Panc1 (cell line): ENCODE measurements at regions of chr3 and their contacts with region 1.

Region 1: DNA sequence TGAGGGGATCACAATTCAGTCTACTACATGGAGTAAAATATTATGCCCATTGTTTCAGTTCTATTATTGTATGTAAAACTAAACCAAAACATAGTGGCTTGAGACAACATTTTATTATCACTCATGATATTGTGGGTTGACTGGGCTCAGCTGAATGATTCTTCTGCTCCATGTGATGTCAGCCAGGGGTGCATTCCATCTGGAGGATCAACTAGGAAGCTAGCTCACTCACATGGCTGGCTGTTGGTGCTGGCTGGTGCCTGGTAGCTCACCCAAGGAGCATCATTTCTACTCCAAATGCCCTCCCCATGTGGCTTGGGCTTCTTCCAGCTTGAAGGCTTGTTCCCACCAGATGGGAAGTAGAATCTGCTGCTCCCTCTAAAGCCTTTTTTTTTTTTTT is 51.8 kb upstream of the CLRN1 start:
- DNase-seq: no peak
- ATAC-seq: no peak
- H3K4me3 ChIP-seq: no peak overlapping the region
- H3K27ac ChIP-seq: no peak overlapping the region
- H3K4me1 ChIP-seq: no peaks in the 10 kb centered on the region
- H3K27me3 ChIP-seq: peaks cover 6% of the 10 kb centered on the region; the same call in 1 of the 2 replicates
- CTCF ChIP-seq: no peak

Region 2: DNA sequence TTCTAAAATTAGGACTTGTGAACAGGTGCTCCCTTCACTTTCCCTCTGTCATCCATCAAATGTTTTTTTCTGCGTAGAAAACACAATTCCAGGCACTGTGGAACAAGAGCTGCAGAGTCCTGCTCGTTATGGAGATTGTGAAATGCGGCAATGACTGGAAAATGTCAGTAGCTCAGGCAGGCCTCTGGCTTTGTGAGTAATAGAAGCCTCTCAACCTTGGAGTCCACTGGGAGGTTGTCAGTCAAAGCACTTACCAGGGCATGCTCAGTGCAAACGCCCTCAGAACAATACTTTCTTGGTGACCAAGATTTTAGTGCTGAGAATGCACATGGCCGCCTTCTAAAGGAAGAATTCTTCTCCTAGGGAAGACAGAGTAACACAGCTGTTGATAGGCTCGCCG is 34.4 kb after region 1 on chr3:
- CTCF ChIA-PET with region 1: no interaction called
- POLR2A ChIA-PET with region 1: interaction called, 17 read pairs
- in situ Hi-C with region 1: no loop called
- intact Hi-C with region 1: no loop called
- DNase-seq: no peak
- ATAC-seq: no peak
- H3K4me3 ChIP-seq: no peak overlapping the region
- H3K27ac ChIP-seq: no peak overlapping the region
- H3K4me1 ChIP-seq: no peaks in the 10 kb centered on the region
- H3K27me3 ChIP-seq: peaks cover 4% of the 10 kb centered on the region
- CTCF ChIP-seq: no peak

Region 3: GRCh38 chr3:151086484-151087456 is 62.4 kb after region 1 on chr3:
- CTCF ChIA-PET with region 1: no interaction called
- POLR2A ChIA-PET with region 1: no interaction called
- in situ Hi-C with region 1: no loop called
- intact Hi-C with region 1: no loop called
- DNase-seq: peak; percentile 15
- ATAC-seq: peak; percentile 93
- H3K4me3 ChIP-seq: peak overlapping the region; percentile 56 to 65
- H3K27ac ChIP-seq: no peak overlapping the region
- H3K4me1 ChIP-seq: no peaks in the 10 kb centered on the region; the same call in 1 of the 2 replicates
- H3K27me3 ChIP-seq: peaks cover 21% of the 10 kb centered on the region
- CTCF ChIP-seq: peak; percentile 73